Right cardiac atrium (tissue), 5 donors: ENCODE measurements at regions of chr19 and their contacts with region 1.

Region 1: GRCh38 chr19:44570984-44571684 is 41.7 kb upstream of the CEACAM20 start:
- DNase-seq: peak in 1 of 3 donors; percentile 26
- ATAC-seq: peak; percentile 81
- H3K4me3 ChIP-seq: no peak overlapping the region
- H3K27ac ChIP-seq: no peak overlapping the region
- H3K4me1 ChIP-seq: no peaks in the 10 kb centered on the region
- H3K27me3 ChIP-seq: no peaks in the 10 kb centered on the region

Region 2: GRCh38 chr19:44447916-44448674 is 123.0 kb before region 1 on chr19 and contains the start of gene ZNF229:
- intact Hi-C with region 1: no loop called
- DNase-seq: peak; percentile 91 to 96 (median 94)
- ATAC-seq: peak; percentile 98 to 99
- H3K4me3 ChIP-seq: peak within 1 kb of the TSS; percentile 45
- H3K27ac ChIP-seq: no peak within 1 kb of the TSS
- H3K4me1 ChIP-seq: peaks cover 3% of the 10 kb centered on the region
- H3K27me3 ChIP-seq: no peaks in the 10 kb centered on the region
- total RNA-seq, gene ZNF229: 7.0 to 7.8 (median 7.2) TPM

Region 3: GRCh38 chr19:44512326-44513298 is 58.5 kb before region 1 on chr19:
- intact Hi-C with region 1: no loop called
- DNase-seq: peak in 2 of 3 donors; percentile 56 to 62
- ATAC-seq: peak in 1 of 2 donors; percentile 41
- H3K4me3 ChIP-seq: no peak overlapping the region
- H3K27ac ChIP-seq: no peak overlapping the region
- H3K4me1 ChIP-seq: no peaks in the 10 kb centered on the region
- H3K27me3 ChIP-seq: no peaks in the 10 kb centered on the region

Region 4: DNA sequence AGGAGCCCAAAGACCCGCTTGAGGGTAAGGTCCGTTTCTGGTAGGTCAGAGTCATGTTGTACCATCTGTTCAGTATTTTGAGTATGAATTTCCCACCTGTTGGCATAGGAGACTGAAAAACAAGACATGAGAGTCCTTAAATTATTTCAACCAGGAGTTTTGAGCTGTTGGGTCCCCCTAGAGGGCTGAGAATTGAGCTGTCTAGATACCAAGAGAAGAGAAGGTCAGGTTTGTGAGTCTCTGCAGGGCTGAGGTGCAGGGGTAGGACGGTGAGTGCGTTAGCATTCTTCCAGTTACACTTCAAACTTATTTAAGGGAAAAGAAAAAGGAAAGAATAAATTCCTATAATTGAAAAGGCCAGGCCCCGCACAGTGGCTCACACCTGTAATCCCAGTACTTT is 211.6 kb after region 1 on chr19:
- intact Hi-C with region 1: loop called in 1 of 4 experiments (anchors 10 kb)
- DNase-seq: peak in 2 of 3 donors; percentile 5 to 10
- ATAC-seq: no peak
- H3K4me3 ChIP-seq: no peak overlapping the region
- H3K27ac ChIP-seq: no peak overlapping the region
- H3K4me1 ChIP-seq: no peaks in the 10 kb centered on the region
- H3K27me3 ChIP-seq: no peaks in the 10 kb centered on the region